ENCODE measurements at regions of chr4 and their contacts with region 1.

Region 1: GRCh38 chr4:86895692-86896488 is 3.7 kb upstream of the C4orf36 start:
- DNase-seq: peak in 1 of 2 donors; percentile 53
- ATAC-seq: peak in 5 of 8 donors; percentile 36 to 59 (median 55)
- H3K4me3 ChIP-seq: no peak overlapping the region
- H3K27ac ChIP-seq: no peak overlapping the region
- H3K4me1 ChIP-seq: peaks cover 0 to 26% (median 0%) of the 10 kb centered on the region in 9 donors
- H3K27me3 ChIP-seq: peaks cover 0 to 16% (median 0%) of the 10 kb centered on the region in 7 donors
- CTCF ChIP-seq: peak; percentile 50 to 89 (median 80)

Region 2: GRCh38 chr4:86497980-86498862 is 397.7 kb before region 1 on chr4:
- intact Hi-C with region 1: loop called (anchors 1 to 5 kb)
- DNase-seq: peak in 1 of 2 donors; percentile 13
- ATAC-seq: peak; percentile 68 to 90 (median 84)
- H3K4me3 ChIP-seq: no peak overlapping the region
- H3K27ac ChIP-seq: peak overlapping the region in 2 of 10 donors; percentile 23 to 44
- H3K4me1 ChIP-seq: peaks cover 0 to 14% (median 6%) of the 10 kb centered on the region in 9 donors
- H3K27me3 ChIP-seq: peaks cover 0 to 5% (median 0%) of the 10 kb centered on the region in 7 donors
- CTCF ChIP-seq: peak; percentile 64 to 86 (median 78)

Region 3: DNA sequence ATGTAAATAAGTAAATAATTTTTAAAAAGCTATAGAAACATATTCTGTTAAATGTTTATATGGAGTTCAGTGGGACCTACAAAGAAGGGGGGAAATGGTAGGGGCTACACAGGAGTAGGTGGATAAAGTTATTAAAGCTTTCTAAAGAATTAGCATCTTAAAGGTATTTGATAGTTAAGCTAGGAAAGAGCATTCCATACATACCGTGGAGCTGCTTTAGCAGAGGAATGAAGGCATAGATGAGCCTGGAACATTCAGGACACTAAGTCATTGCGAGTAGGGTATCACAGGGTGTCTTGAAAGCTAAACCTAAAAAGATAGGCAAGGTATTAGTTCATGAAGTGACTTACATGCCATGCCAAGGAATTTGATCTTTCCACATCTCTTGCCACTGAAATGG is 107.1 kb before region 1 on chr4:
- intact Hi-C with region 1: loop called in 1 of 10 experiments (anchors 10 kb)
- DNase-seq: no peak
- ATAC-seq: no peak
- H3K4me3 ChIP-seq: no peak overlapping the region
- H3K27ac ChIP-seq: no peak overlapping the region
- H3K4me1 ChIP-seq: no peaks in the 10 kb centered on the region
- H3K27me3 ChIP-seq: no peaks in the 10 kb centered on the region
- CTCF ChIP-seq: no peak

Region 4: DNA sequence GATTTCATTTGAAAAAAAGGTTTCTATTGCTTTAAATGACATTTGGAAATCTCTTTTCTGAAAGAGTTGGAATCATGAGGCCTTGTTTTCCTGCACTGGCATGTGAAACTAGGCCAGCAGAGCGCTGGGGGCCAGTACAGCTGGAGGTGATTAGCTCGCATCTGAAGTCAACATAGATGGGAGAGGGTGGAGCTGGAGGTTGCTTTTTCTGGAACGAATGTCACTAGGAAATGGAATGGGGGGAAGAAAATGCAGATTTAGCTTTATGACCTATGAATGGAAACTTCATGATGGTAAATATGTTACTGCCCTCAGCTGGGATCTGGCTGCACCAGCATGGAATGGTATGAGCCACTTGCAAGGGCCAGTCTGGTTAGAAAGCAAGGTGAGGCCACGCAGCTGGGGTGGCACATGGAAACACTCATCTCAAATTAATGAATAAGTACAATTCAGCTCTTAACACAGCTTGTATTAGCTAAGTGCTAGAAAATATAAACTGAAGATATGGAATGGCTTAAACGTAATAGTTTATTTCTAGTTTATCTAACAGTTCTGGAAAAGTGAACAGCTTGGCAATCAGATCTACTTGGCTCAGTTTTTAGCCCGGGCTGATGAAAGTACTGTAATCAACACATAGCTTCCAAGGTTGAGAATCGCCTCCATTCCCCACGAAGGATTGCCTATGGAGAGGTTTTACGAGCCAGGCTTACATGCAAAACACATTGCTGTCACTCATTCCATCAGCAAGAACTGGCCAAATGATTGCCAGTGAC is 79.2 kb before region 1 on chr4:
- intact Hi-C with region 1: loop called in 1 of 10 experiments (anchors 10 kb)
- DNase-seq: peak; percentile 13 to 29
- ATAC-seq: peak in 7 of 8 donors; percentile 67 to 94 (median 83)
- H3K4me3 ChIP-seq: no peak overlapping the region
- H3K27ac ChIP-seq: peak overlapping the region in 7 of 10 donors; percentile 10 to 63 (median 36)
- H3K4me1 ChIP-seq: peaks cover 0 to 12% (median 0%) of the 10 kb centered on the region in 9 donors
- H3K27me3 ChIP-seq: no peaks in the 10 kb centered on the region
- CTCF ChIP-seq: no peak

Region 5: DNA sequence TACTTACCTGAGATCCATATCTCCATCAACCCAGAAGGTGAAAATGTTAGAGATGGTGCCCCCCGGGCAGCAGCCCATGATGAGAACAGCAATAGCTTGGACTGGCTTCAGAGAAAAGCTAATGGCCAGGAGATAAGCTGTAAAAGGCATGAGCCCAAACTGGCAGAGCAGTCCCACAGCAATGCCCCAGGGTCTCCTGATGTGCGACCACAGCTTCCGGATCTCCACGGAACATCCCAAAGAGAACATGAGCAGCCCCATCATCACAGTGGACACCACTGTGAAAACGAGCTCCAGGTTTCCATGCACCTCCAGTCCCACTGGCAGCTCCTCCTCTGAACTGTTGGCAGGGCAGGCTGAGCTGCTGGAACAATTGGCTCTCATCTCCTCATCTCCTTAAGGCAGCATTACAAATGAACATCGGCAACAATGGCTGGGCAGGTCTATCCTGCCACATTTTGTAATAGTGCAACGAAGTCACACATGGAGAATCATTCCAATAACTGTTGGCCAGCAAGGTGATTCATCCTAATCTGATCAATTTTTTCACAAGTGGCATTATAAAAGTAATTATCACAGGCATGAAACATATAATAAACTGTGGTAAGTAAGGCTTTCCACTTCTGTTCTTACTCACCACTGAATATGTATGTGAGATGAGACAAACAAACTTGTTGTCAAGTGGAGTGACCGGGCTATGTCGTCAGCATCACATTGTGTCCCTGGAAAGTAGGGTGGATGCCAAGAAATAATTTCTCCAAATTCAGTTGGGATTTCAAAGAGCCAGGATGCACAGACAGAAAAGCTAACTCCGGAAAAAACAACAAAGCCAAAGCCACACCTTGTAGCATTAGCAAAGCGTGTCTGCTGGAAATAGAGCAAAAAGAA is 46.9 kb before region 1 on chr4 and contains the start of gene SLC10A6:
- intact Hi-C with region 1: loop called in 1 of 10 experiments (anchors 5 kb)
- DNase-seq: peak in 1 of 2 donors; percentile 39
- ATAC-seq: peak in 7 of 8 donors; percentile 62 to 85 (median 78)
- H3K4me3 ChIP-seq: peak within 1 kb of the TSS in 4 of 10 donors; percentile 17 to 33 (median 24)
- H3K27ac ChIP-seq: peak within 1 kb of the TSS in 8 of 10 donors; percentile 35 to 66 (median 45)
- H3K4me1 ChIP-seq: peaks cover 0 to 44% (median 15%) of the 10 kb centered on the region in 9 donors
- H3K27me3 ChIP-seq: no peaks in the 10 kb centered on the region
- CTCF ChIP-seq: no peak
- total RNA-seq, gene SLC10A6: 0.22 to 0.90 (median 0.55) TPM in 9 of 10 donors, not detected in the other